Activated CD4-positive, alpha-beta memory T cell treated with anti-CD3 and anti-CD28 coated beads, Interleukin-2, amount 10 ng/mL, durations not matched to agents 7 days and 5 days (primary cell): ENCODE measurements at regions of chr11 and their contacts with region 1.

Region 1: GRCh38 chr11:65329944-65330403 is 3.7 kb upstream of the DPF2 start:
- DNase-seq: peak; percentile 82
- H3K4me3 Mint-ChIP-seq: no peak overlapping the region
- H3K27ac Mint-ChIP-seq: no peak overlapping the region
- H3K4me1 Mint-ChIP-seq: peaks cover 14% of the 10 kb centered on the region
- H3K27me3 Mint-ChIP-seq: no peaks in the 10 kb centered on the region

Region 2: DNA sequence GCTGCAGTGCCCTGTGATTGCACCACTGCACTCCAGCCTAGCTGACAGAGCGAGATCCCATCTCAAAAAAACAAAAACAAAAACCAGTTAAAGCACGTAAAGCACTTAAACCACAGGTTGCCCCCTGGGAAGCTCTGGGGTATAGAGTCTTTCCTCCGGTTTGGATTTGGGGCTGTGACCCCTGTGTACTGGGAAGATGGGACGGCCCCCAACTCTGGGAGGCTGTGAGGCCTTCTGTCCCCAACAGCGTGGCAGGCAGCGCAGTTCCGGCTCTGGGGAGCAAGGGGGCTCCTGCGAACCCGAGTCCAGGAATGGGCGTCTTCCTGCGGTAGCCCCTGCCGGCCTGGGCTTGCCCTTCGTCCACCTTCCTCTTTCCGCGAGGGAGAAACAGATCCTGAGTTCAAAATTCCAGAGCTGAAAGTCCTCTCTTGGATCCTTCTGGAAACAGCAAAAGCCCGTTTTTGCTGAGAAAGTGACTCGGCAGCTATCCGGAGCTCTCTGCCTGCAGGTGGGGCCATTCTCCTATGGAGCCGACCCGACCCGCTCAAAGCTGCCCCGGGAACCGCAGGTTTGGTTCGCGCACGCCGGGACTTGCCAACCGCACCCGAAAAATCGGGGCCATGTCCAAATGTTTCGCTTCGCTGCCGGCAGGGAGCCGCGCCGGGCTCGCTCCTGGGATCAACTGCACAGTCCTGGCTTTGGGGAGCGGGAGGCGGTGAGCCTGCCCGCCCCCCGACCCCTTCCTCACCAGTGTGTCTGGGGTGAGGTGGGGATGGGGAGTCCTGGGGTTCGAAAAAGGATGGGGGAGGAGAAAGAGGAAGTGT is 104.5 kb before region 1 on chr11:
- CTCF ChIA-PET with region 1: interaction called, 47 read pairs
- POLR2A ChIA-PET with region 1: no interaction called
- DNase-seq: peak; percentile 64
- H3K4me3 Mint-ChIP-seq: peak overlapping the region; percentile 62
- H3K27ac Mint-ChIP-seq: no peak overlapping the region
- H3K4me1 Mint-ChIP-seq: peaks cover 21% of the 10 kb centered on the region
- H3K27me3 Mint-ChIP-seq: peaks cover 31% of the 10 kb centered on the region

Region 3: GRCh38 chr11:65236194-65237059 is 93.5 kb before region 1 on chr11:
- CTCF ChIA-PET with region 1: no interaction called
- POLR2A ChIA-PET with region 1: no interaction called
- DNase-seq: no peak
- H3K4me3 Mint-ChIP-seq: no peak overlapping the region
- H3K27ac Mint-ChIP-seq: no peak overlapping the region
- H3K4me1 Mint-ChIP-seq: no peaks in the 10 kb centered on the region
- H3K27me3 Mint-ChIP-seq: no peaks in the 10 kb centered on the region

Region 4: DNA sequence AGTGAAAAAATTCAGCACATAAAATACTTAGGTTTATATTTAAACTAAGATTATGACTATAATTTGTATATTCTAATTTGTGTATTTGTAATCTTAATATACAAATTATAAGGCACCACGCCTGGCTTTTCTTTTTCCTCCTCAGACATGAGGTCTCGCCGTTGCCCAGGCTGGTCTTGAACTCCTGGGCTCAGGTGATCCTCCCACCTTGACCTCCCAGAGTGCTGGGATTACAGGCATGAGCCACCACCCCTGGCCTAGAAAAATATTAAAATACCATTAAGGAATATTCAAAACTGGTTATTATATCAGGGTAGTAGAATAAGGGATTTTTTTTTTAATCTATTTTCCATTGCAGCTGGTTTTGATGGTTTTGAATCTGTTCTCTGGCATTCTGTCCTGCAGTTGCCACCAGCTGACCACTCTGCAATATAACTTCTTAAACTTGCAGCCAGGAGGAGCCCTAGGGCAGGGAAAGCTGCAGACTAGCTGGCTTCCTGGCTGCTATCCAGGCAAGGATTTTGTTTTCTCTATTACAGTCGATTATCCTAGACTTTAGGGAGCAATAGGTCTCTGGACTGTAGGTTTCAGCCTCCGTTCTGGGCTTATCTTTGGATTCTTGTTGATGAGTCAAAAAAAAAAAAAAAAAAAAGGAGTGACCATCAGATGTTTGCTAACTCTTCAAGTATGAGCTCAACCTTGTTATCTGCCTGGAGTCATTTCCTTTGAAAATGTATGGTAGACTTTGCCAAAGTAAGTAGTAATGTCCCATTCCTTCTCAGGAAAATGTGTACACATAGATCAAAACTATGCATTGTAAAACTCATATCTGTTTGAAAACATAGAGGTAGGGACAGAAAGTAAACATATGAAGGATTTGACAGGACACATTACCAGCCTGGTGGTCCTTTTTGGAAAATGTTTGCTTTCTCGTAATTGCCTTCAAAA is 55.0 kb before region 1 on chr11:
- CTCF ChIA-PET with region 1: interaction called, 24 read pairs
- POLR2A ChIA-PET with region 1: interaction called, 4 read pairs
- DNase-seq: peak; percentile 39
- H3K4me3 Mint-ChIP-seq: no peak overlapping the region
- H3K27ac Mint-ChIP-seq: no peak overlapping the region
- H3K4me1 Mint-ChIP-seq: peaks cover 20% of the 10 kb centered on the region
- H3K27me3 Mint-ChIP-seq: no peaks in the 10 kb centered on the region

Region 5: DNA sequence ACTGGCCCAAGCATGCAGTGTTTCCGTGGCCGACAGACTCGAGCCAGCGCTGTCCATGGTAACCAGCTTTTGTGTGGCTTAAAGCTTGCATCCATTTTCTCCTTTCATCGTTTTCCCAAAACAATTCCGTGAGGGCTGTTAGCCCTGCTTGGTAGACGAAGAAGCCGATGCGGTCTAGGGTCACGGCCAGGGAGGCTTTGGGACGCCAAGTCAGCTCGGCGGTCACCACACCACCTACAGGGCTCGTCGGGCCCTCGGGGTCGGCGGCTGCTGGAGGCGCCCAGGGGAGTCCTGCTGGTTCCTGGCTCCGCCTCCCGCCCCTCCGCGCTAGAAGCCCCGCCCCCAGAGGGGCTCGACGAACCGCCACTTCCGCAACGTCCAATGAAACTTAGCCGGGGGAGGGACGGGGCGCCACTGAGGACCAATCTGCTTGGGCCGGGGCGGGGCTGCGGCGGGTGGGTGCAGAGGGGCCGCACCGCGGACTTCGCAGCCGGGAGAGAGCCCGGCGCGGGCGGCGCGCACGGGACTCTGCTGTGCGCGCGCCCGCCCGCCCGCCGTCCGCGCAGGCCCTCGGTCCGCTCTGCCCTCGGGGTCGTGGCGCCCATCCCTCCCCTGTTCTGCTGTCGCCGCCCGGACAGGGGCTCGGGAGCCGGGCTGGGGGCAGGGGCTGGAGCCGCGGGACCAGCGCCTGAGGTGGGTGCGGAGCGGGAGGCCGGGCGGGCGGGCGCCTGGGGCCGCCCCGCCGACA is 24.5 kb after region 1 on chr11 and contains the start of gene TIGD3:
- CTCF ChIA-PET with region 1: interaction called, 117 read pairs
- POLR2A ChIA-PET with region 1: interaction called, 12 read pairs
- DNase-seq: peak; percentile 96
- H3K4me3 Mint-ChIP-seq: peak within 1 kb of the TSS; percentile 83
- H3K27ac Mint-ChIP-seq: peak within 1 kb of the TSS; percentile 0
- H3K4me1 Mint-ChIP-seq: peaks cover 17% of the 10 kb centered on the region
- H3K27me3 Mint-ChIP-seq: peaks cover 8% of the 10 kb centered on the region
- total RNA-seq, gene TIGD3: 0.58 to 0.88 TPM

Region 6: GRCh38 chr11:65576867-65577769 is 247.1 kb after region 1 on chr11:
- CTCF ChIA-PET with region 1: no interaction called
- POLR2A ChIA-PET with region 1: no interaction called
- DNase-seq: peak; percentile 48
- H3K4me3 Mint-ChIP-seq: peak overlapping the region; percentile 88
- H3K27ac Mint-ChIP-seq: peak overlapping the region; percentile 82
- H3K4me1 Mint-ChIP-seq: peaks cover 44% of the 10 kb centered on the region
- H3K27me3 Mint-ChIP-seq: no peaks in the 10 kb centered on the region

Region 7: DNA sequence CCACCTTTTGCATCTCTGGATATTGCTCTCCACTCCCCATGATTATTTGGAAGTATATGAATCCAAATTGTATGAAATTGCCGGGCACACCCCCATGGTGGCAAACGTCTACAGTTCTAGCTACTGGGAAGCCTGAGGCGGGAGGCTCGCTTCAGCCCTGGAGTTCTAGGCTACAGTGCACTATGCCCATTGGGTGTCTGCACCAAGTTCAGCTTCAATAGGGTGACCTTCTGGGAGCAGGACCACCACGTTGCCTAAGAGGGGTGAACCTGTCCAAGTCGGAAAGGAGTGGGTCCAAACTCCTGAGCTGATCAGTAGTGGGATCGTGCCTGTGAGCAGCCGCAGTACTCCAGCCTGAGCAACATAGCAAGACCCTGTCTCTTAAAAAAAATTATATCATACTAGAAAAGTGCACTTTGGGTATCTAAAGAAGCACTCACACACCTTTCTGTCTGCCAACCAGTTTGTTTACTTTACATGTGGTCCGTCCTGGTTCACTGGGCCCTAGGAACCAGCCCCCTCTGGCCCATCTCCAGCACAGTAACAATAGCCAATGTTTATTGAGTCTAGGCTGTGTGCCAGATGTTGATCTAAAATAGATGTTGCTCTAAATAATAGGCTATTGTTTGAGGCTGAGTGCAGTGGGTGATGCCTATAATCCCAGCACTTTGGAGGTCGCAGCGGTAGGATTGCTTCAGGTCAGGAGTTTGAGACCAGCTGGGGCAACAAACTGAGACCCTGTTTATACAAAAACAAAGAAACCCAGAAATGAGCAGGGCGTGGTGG is 365.7 kb after region 1 on chr11:
- CTCF ChIA-PET with region 1: no interaction called
- POLR2A ChIA-PET with region 1: no interaction called
- DNase-seq: no peak
- H3K4me3 Mint-ChIP-seq: no peak overlapping the region
- H3K27ac Mint-ChIP-seq: no peak overlapping the region
- H3K4me1 Mint-ChIP-seq: peaks cover 2% of the 10 kb centered on the region
- H3K27me3 Mint-ChIP-seq: peaks cover 14% of the 10 kb centered on the region